Activated CD4-positive, alpha-beta memory T cell treated with anti-CD3 and anti-CD28 coated beads for 36 hours (primary cell): ENCODE measurements at regions of chr1 and their contacts with region 1.

Region 1: DNA sequence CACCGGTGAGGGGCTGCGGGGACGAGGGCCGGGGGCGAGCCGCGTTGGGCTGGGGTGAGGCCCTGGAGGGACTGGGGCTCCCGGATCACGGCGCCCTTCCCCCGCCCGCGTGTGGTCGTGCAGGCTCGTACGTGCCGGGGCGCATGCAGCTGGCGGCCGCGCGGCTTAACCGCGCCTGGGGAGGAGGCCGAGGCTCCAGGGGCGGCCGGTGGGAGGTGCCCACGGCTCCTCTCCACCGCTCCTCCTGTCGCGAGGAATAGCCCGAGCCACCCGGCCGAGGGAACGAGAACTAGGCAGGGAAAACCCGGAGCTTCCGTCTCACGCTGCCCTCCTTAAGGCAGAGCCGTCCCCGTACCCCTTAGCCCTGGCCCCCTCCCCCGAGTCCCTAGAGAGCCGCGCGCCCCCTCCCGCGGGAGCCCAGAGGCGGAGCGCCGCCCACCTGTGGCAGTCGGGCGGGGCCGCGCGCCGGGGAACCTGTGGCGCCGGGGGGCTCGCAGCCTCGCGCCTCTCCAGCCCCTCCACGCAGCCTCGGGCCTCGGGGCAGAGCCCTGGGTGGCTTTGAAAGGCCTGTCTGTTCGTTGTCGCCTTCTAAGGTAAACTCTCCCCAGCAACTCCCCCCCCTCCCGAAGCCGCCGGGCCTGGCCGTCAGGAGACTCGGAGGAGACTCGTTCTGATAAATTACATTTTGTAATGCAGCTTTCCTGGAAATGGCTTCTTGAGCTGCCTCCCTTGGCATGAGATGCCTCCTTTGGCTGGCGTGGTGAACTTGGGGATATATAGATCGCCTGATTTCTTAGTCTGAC is 746 bp downstream of the AK4 start:
- DNase-seq: peak; percentile 65
- H3K4me3 Mint-ChIP-seq: peak overlapping the region; percentile 76
- H3K27ac Mint-ChIP-seq: no peak overlapping the region
- H3K4me1 Mint-ChIP-seq: peaks cover 14% of the 10 kb centered on the region
- H3K27me3 Mint-ChIP-seq: peaks cover 31% of the 10 kb centered on the region

Region 2: DNA sequence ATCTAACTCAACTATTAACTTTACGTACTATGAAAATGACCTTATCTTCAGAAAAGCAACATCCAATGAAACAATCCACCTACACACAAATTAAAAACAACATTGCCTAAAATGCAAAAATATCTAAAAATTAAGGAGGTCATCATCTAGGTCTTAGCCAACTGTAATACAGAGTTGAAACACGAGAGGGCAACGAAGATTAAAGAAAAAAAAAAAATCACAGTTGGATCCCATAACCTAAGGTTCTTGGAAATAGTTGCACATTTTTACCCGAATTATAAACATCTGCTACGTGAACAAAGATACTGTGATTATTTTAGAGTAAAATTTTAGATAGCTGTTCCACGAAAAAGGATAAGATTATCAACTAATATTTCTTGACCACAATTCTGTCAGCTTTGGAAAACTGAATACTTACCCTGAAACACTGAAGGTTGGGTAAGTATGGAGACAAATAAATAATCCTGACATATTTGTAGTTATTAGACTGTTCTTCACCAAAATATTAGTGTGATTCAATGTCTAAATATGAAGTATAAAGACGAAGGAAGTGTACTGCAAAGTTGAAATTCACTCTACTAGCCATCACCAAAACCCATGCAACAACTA is 88.7 kb before region 1 on chr1:
- CTCF ChIA-PET with region 1: no interaction called
- POLR2A ChIA-PET with region 1: no interaction called
- intact Hi-C with region 1: loop called (anchors 5 kb)
- DNase-seq: no peak
- H3K4me3 Mint-ChIP-seq: no peak overlapping the region
- H3K27ac Mint-ChIP-seq: no peak overlapping the region
- H3K4me1 Mint-ChIP-seq: peaks cover 45% of the 10 kb centered on the region
- H3K27me3 Mint-ChIP-seq: no peaks in the 10 kb centered on the region

Region 3: GRCh38 chr1:65083263-65083896 is 65.4 kb before region 1 on chr1:
- CTCF ChIA-PET with region 1: no interaction called
- POLR2A ChIA-PET with region 1: no interaction called
- intact Hi-C with region 1: no loop called
- DNase-seq: peak; percentile 15
- H3K4me3 Mint-ChIP-seq: no peak overlapping the region
- H3K27ac Mint-ChIP-seq: no peak overlapping the region
- H3K4me1 Mint-ChIP-seq: no peaks in the 10 kb centered on the region
- H3K27me3 Mint-ChIP-seq: peaks cover 3% of the 10 kb centered on the region